H1 (cell line): ENCODE measurements at regions of chr3 and their contacts with region 1.

Region 1: GRCh38 chr3:138594150-138594934 is at the start of gene CEP70:
- DNase-seq: peak; percentile 85 to 96
- H3K4me3 ChIP-seq: peak within 1 kb of the TSS; percentile 70 to 82 (median 78)
- H3K27ac ChIP-seq: peak within 1 kb of the TSS; percentile 54; the same call in 1 of the 2 replicates
- H3K4me1 ChIP-seq: peaks cover 0 to 5% (median 3%) of the 10 kb centered on the region in 4 experiments; a peak in 3 of 7 replicates
- H3K27me3 ChIP-seq: no peaks in the 10 kb centered on the region
- CTCF ChIP-seq: peak; percentile 39 to 92 (median 65)
- EP300 ChIP-seq: no peak
- POLR2A ChIP-seq: peak; percentile 54 to 84
- RAD21 ChIP-seq: peak; percentile 84 to 87
- total RNA-seq, gene CEP70: 23.6 and 26.2 TPM in 2 replicates

Region 2: GRCh38 chr3:138479438-138479863 is 114.9 kb before region 1 on chr3:
- CTCF ChIA-PET with region 1: interaction called, 28 read pairs
- POLR2A ChIA-PET with region 1: interaction called, 3 read pairs
- DNase-seq: no peak
- H3K4me3 ChIP-seq: no peak overlapping the region
- H3K27ac ChIP-seq: no peak overlapping the region
- H3K4me1 ChIP-seq: peaks cover 0 to 2% (median 0%) of the 10 kb centered on the region in 4 experiments; a peak in 1 of 7 replicates
- H3K27me3 ChIP-seq: no peaks in the 10 kb centered on the region
- CTCF ChIP-seq: peak; percentile 74 to 90 (median 81)
- EP300 ChIP-seq: no peak
- POLR2A ChIP-seq: no peak
- RAD21 ChIP-seq: peak; percentile 87 to 91

Region 3: GRCh38 chr3:138578961-138579574 is 15.3 kb before region 1 on chr3:
- CTCF ChIA-PET with region 1: interaction called, 6 read pairs
- POLR2A ChIA-PET with region 1: interaction called, 11 read pairs
- DNase-seq: no peak
- H3K4me3 ChIP-seq: no peak overlapping the region
- H3K27ac ChIP-seq: no peak overlapping the region
- H3K4me1 ChIP-seq: peaks cover 4 to 11% (median 5%) of the 10 kb centered on the region in 4 experiments
- H3K27me3 ChIP-seq: no peaks in the 10 kb centered on the region
- CTCF ChIP-seq: no peak
- EP300 ChIP-seq: no peak
- POLR2A ChIP-seq: no peak
- RAD21 ChIP-seq: no peak

Region 4: GRCh38 chr3:138608322-138609135 is 14.2 kb after region 1 on chr3 and contains the start of gene FAIM:
- CTCF ChIA-PET with region 1: interaction called, 8 read pairs
- POLR2A ChIA-PET with region 1: interaction called, 16 read pairs
- DNase-seq: peak in 1 of 2 experiments; percentile 82
- H3K4me3 ChIP-seq: peak within 1 kb of the TSS; percentile 56 to 80 (median 66)
- H3K27ac ChIP-seq: 0 out of 2 replicates have a peak within 1 kb of the TSS, but pooled peaks have one; percentile 60
- H3K4me1 ChIP-seq: peaks cover 0 to 5% (median 4%) of the 10 kb centered on the region in 4 experiments; a peak in 6 of 7 replicates
- H3K27me3 ChIP-seq: peaks cover 0 to 4% (median 1%) of the 10 kb centered on the region in 4 experiments; a peak in 2 of 7 replicates
- CTCF ChIP-seq: no peak
- EP300 ChIP-seq: no peak
- POLR2A ChIP-seq: peak in 1 of 2 experiments; percentile 88; a peak in 2 of 3 replicates
- RAD21 ChIP-seq: 0 out of 4 replicates have a peak, but pooled peaks of 1 of the 2 experiments have one; percentile 1
- total RNA-seq, gene FAIM: 6.8 and 7.1 TPM in 2 replicates

Region 5: DNA sequence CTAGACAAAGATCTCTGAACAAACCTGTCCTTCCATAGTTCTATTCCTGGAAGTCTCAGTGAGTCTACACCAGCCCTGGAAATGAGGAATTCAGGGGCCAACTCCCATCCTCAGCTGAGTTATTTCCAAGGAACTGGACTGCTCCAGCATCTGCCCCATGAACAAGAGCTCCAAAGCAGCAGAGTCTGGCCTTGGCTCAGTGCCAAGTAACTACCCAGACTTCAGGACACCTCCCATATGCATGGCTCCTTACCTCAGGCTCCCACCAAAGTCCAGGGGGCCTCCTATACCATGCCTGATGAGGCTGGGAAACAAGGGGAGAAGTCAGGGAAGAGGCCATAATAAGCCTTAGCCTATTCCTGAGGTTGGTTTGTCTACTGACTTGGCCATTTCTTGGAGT is 59.2 kb after region 1 on chr3:
- CTCF ChIA-PET with region 1: no interaction called
- POLR2A ChIA-PET with region 1: no interaction called
- DNase-seq: no peak
- H3K4me3 ChIP-seq: no peak overlapping the region
- H3K27ac ChIP-seq: no peak overlapping the region
- H3K4me1 ChIP-seq: no peaks in the 10 kb centered on the region
- H3K27me3 ChIP-seq: no peaks in the 10 kb centered on the region
- CTCF ChIP-seq: no peak
- EP300 ChIP-seq: no peak
- POLR2A ChIP-seq: no peak
- RAD21 ChIP-seq: no peak

Region 6: GRCh38 chr3:138774529-138775253 is 180.3 kb after region 1 on chr3:
- CTCF ChIA-PET with region 1: no interaction called
- POLR2A ChIA-PET with region 1: no interaction called
- DNase-seq: peak in 1 of 2 experiments; percentile 4
- H3K4me3 ChIP-seq: no peak overlapping the region
- H3K27ac ChIP-seq: no peak overlapping the region
- H3K4me1 ChIP-seq: no peaks in the 10 kb centered on the region
- H3K27me3 ChIP-seq: no peaks in the 10 kb centered on the region
- CTCF ChIP-seq: no peak
- EP300 ChIP-seq: no peak
- POLR2A ChIP-seq: no peak
- RAD21 ChIP-seq: no peak

Region 7: GRCh38 chr3:138935848-138936740 is 341.8 kb after region 1 on chr3:
- CTCF ChIA-PET with region 1: interaction called, 12 read pairs
- POLR2A ChIA-PET with region 1: no interaction called
- DNase-seq: peak in 1 of 2 experiments; percentile 99
- H3K4me3 ChIP-seq: peak overlapping the region; percentile 11 to 59 (median 39); a peak in 7 of 8 replicates
- H3K27ac ChIP-seq: no peak overlapping the region
- H3K4me1 ChIP-seq: peaks cover 9 to 28% (median 19%) of the 10 kb centered on the region in 4 experiments
- H3K27me3 ChIP-seq: peaks cover 46 to 69% (median 59%) of the 10 kb centered on the region in 4 experiments
- CTCF ChIP-seq: peak in 2 of 3 experiments; percentile 84 to 86; a peak in 3 of 4 replicates
- EP300 ChIP-seq: no peak
- POLR2A ChIP-seq: no peak; a peak in 1 of 3 replicates
- RAD21 ChIP-seq: peak; percentile 32 to 63; a peak in 3 of 4 replicates

Region 8: DNA sequence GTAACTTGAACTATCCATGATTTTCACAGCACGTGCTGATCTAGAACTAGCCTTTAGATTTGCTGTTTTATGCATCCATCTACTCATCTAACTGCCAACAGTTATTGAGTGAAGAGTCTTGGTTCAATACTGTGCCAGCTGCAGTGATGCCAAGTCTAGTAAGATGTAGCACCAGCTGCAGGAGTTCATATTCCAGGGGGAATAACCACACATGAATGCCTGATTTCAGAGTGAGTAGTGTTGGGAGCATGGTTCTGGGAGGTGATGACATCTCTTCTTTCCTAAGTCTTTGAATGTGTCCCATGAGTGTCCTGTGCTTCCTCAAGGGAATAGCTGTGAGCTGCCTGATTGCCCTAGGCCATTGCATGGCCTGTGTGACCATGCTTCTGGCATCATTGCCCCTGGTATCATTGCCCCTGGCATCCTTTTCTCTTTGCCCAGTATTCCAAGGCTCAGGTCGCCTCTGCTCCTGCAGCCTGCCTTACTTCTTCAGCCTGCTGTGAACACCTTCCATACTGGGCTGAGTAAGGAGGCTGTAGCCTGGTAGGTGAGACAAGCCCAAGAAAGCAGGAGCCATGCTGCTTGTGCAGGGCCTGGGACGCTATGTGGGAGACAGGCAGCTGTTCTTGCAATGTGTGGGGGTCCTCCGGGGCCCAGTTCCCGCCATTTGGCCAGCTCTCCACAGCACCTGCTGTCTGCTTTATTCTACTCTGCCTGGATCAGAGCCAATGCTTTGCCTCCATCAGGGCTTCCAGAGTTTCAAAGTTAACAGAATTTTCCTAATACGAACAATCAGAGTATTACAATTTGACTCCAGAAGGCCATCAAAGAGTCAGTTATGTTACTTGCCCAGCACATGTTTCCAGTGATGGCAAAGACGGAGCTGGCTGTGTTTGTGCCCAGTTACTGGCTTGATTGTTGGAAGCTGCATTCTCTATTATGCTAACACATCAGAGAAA is 1413.8 kb after region 1 on chr3:
- CTCF ChIA-PET with region 1: no interaction called
- POLR2A ChIA-PET with region 1: no interaction called
- DNase-seq: no peak
- H3K4me3 ChIP-seq: no peak overlapping the region
- H3K27ac ChIP-seq: no peak overlapping the region
- H3K4me1 ChIP-seq: peaks cover 0 to 3% (median 1%) of the 10 kb centered on the region in 4 experiments; a peak in 3 of 7 replicates
- H3K27me3 ChIP-seq: no peaks in the 10 kb centered on the region
- CTCF ChIP-seq: no peak
- EP300 ChIP-seq: no peak
- POLR2A ChIP-seq: no peak
- RAD21 ChIP-seq: no peak